Natural killer cell (primary cell): ENCODE measurements at regions of chr6 and their contacts with region 1.

Region 1: GRCh38 chr6:4805553-4806336 is 29.5 kb downstream of the CDYL start:
- DNase-seq: peak in 1 of 2 donors; percentile 45
- ATAC-seq: peak in 1 of 3 donors; percentile 38
- H3K4me3 ChIP-seq: no peak overlapping the region
- H3K4me3 Mint-ChIP-seq: no peak overlapping the region
- H3K27ac ChIP-seq: no peak overlapping the region
- H3K27ac Mint-ChIP-seq: peak overlapping the region; percentile 1 to 67
- H3K4me1 ChIP-seq: peaks cover 31% of the 10 kb centered on the region
- H3K4me1 Mint-ChIP-seq: peaks cover 91 to 93% of the 10 kb centered on the region in 2 donors
- H3K27me3 ChIP-seq: no peaks in the 10 kb centered on the region
- H3K27me3 Mint-ChIP-seq: no peaks in the 10 kb centered on the region
- CTCF ChIP-seq: peak; percentile 31

Region 2: GRCh38 chr6:4788953-4789584 is 16.7 kb before region 1 on chr6:
- intact Hi-C with region 1: loop called (anchors 1 kb)
- DNase-seq: no peak
- ATAC-seq: no peak
- H3K4me3 ChIP-seq: no peak overlapping the region
- H3K4me3 Mint-ChIP-seq: peak overlapping the region; percentile 89
- H3K27ac ChIP-seq: no peak overlapping the region
- H3K27ac Mint-ChIP-seq: peak overlapping the region; percentile 89 to 90
- H3K4me1 ChIP-seq: peaks cover 31% of the 10 kb centered on the region
- H3K4me1 Mint-ChIP-seq: peaks cover 58 to 60% of the 10 kb centered on the region in 2 donors
- H3K27me3 ChIP-seq: no peaks in the 10 kb centered on the region
- H3K27me3 Mint-ChIP-seq: no peaks in the 10 kb centered on the region
- CTCF ChIP-seq: no peak

Region 3: DNA sequence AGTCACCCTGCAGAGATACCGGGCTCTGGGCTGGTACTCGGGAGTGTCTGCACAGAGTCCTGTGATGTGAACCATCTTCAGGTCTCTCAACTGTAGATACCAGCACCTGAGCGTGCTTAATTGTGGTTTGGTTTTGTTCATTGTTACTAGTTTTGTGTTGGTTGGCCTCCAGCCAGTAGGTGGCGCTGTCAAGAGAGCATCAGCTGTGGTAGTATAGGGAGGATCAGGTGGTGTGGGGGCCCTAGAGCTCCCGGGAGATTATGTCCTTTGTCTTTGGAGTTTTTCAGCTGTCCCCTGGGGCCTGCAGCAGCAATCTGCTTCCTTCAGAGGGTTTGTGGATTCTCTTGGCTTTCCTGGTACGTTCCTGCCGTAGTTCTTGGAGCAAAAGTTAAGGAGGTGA is 38.4 kb after region 1 on chr6:
- intact Hi-C with region 1: loop called (anchors 5 kb)
- DNase-seq: peak in 1 of 2 donors; percentile 13
- ATAC-seq: no peak
- H3K4me3 ChIP-seq: no peak overlapping the region
- H3K4me3 Mint-ChIP-seq: no peak overlapping the region
- H3K27ac ChIP-seq: no peak overlapping the region
- H3K27ac Mint-ChIP-seq: peak overlapping the region in 1 of 2 donors; percentile 32
- H3K4me1 ChIP-seq: peaks cover 3% of the 10 kb centered on the region
- H3K4me1 Mint-ChIP-seq: peaks cover 73 to 74% of the 10 kb centered on the region in 2 donors
- H3K27me3 ChIP-seq: no peaks in the 10 kb centered on the region
- H3K27me3 Mint-ChIP-seq: no peaks in the 10 kb centered on the region
- CTCF ChIP-seq: no peak

Region 4: GRCh38 chr6:5095236-5095635 is 289.5 kb after region 1 on chr6:
- intact Hi-C with region 1: no loop called
- DNase-seq: no peak
- ATAC-seq: no peak
- H3K4me3 ChIP-seq: no peak overlapping the region
- H3K4me3 Mint-ChIP-seq: no peak overlapping the region
- H3K27ac ChIP-seq: no peak overlapping the region
- H3K27ac Mint-ChIP-seq: no peak overlapping the region
- H3K4me1 ChIP-seq: no peaks in the 10 kb centered on the region
- H3K4me1 Mint-ChIP-seq: no peaks in the 10 kb centered on the region
- H3K27me3 ChIP-seq: no peaks in the 10 kb centered on the region
- H3K27me3 Mint-ChIP-seq: peaks cover 0 to 6% of the 10 kb centered on the region in 2 donors
- CTCF ChIP-seq: no peak